ENCODE measurements at regions of chr5 and their contacts with region 1.

Region 1: DNA sequence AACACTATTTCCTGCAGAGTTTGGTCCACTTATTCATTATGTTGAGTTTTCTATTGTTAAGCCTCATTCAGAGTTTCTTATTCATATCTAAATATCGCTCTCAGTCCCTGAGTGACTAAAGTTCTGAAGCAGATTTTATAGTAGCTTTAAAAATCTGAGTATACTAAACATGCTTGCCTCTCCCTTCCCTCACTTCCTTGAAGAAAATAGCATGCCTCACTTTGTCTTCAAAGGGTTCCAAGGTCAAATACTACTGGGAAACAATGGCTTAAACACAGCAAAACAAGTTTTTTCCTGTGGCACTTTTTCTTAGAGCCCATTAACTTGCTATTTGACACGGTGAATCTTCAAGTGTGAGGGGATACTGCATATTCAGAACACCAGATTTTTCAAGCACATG is 41.1 kb upstream of the DAB2 start:
- DNase-seq: peak; percentile 76
- H3K4me3 ChIP-seq: no peak overlapping the region
- H3K27ac ChIP-seq: peak overlapping the region; percentile 31
- H3K4me1 ChIP-seq: peaks cover 15% of the 10 kb centered on the region
- H3K27me3 ChIP-seq: no peaks in the 10 kb centered on the region
- CTCF ChIP-seq: no peak
- POLR2A ChIP-seq: no peak

Region 2: GRCh38 chr5:39455645-39456044 is 10.2 kb before region 1 on chr5:
- CTCF ChIA-PET with region 1: interaction called, 12 read pairs
- POLR2A ChIA-PET with region 1: no interaction called
- dilution Hi-C with region 1: no loop called
- intact Hi-C with region 1: no loop called
- DNase-seq: no peak
- H3K4me3 ChIP-seq: no peak overlapping the region
- H3K27ac ChIP-seq: no peak overlapping the region
- H3K4me1 ChIP-seq: no peaks in the 10 kb centered on the region
- H3K27me3 ChIP-seq: no peaks in the 10 kb centered on the region
- CTCF ChIP-seq: no peak
- POLR2A ChIP-seq: no peak

Measured in endothelial cell of umbilical vein (primary cell).